ENCODE measurements at regions of chr1 and their contacts with region 1.

Region 1: DNA sequence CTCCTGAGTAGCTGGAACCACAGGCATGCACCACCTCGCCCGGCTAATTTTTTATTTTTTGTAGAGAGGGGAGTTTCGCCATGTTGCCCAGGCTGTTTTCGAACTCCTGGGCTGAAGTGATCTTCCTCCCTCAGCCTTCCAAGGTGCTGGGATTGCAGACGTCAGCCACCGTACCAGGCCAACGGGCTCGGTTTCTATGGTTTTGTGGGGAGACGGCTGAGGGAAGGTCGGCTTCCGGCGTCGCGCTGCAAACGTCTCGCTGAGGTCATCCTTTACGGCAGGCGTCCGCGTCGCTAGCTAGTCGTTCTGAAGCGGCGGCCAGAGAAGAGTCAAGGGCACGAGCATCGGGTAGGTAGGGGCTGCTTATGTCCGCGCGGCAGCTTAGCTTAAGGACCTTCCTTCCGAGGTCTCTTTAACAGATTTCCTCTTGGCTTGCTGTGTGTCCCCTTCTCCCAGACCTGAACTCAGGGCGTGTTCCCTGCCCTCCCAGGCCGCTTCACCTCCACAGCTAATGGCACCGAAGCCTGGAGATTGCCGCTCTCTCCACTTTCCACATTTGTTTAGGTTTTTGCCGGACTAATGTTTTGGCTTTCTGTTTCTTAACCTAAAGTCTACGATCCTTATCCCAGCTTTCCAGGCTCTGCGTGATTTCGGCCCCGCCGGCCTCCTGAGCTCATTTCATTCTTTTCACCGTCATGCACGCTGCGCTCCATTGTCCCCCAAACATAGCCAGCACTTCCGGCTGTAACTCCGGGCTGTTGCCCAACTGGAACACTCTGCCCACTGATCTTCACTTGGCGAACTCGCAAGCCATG is at the start of gene NDUFS5:
- DNase-seq: peak; percentile 80 to 87 (median 83)
- H3K4me3 ChIP-seq: peak within 1 kb of the TSS; percentile 88 to 93
- H3K4me3 Mint-ChIP-seq: peak within 1 kb of the TSS; percentile 94 to 100 (median 97)
- H3K27ac ChIP-seq: peak within 1 kb of the TSS; percentile 86
- H3K27ac Mint-ChIP-seq: peak within 1 kb of the TSS; percentile 95 to 99 (median 97)
- H3K4me1 ChIP-seq: peaks cover 23% of the 10 kb centered on the region
- H3K4me1 Mint-ChIP-seq: peaks cover 18 to 43% (median 31%) of the 10 kb centered on the region in 4 donors
- H3K27me3 ChIP-seq: no peaks in the 10 kb centered on the region
- H3K27me3 Mint-ChIP-seq: no peaks in the 10 kb centered on the region
- total RNA-seq, gene NDUFS5: 122 to 125 TPM

Region 2: GRCh38 chr1:38859561-38860453 is 166.5 kb before region 1 on chr1 and contains the start of gene RRAGC:
- CTCF ChIA-PET with region 1: interaction called, 4 read pairs
- POLR2A ChIA-PET with region 1: interaction called, 9 read pairs
- intact Hi-C with region 1: loop called (anchors 1 kb)
- DNase-seq: peak; percentile 97 to 99 (median 97)
- H3K4me3 ChIP-seq: peak within 1 kb of the TSS; percentile 70 to 92
- H3K4me3 Mint-ChIP-seq: peak within 1 kb of the TSS; percentile 91 to 97 (median 96)
- H3K27ac ChIP-seq: peak within 1 kb of the TSS; percentile 65
- H3K27ac Mint-ChIP-seq: peak within 1 kb of the TSS; percentile 88 to 98 (median 94)
- H3K4me1 ChIP-seq: peaks cover 35% of the 10 kb centered on the region
- H3K4me1 Mint-ChIP-seq: peaks cover 37 to 77% (median 57%) of the 10 kb centered on the region in 4 donors
- H3K27me3 ChIP-seq: no peaks in the 10 kb centered on the region
- H3K27me3 Mint-ChIP-seq: no peaks in the 10 kb centered on the region
- total RNA-seq, gene RRAGC: 24.5 to 25.2 TPM

Region 3: GRCh38 chr1:38873027-38873969 is 153.0 kb before region 1 on chr1 and contains the start of gene MYCBP:
- CTCF ChIA-PET with region 1: interaction called, 3 read pairs
- POLR2A ChIA-PET with region 1: interaction called, 12 read pairs
- intact Hi-C with region 1: loop called (anchors 1 kb)
- DNase-seq: peak; percentile 96 to 99 (median 98)
- H3K4me3 ChIP-seq: peak within 1 kb of the TSS; percentile 77 to 81
- H3K4me3 Mint-ChIP-seq: peak within 1 kb of the TSS; percentile 88 to 95 (median 92)
- H3K27ac ChIP-seq: peak within 1 kb of the TSS; percentile 79
- H3K27ac Mint-ChIP-seq: peak within 1 kb of the TSS; percentile 88 to 94 (median 93)
- H3K4me1 ChIP-seq: peaks cover 35% of the 10 kb centered on the region
- H3K4me1 Mint-ChIP-seq: peaks cover 16 to 34% (median 25%) of the 10 kb centered on the region in 4 donors
- H3K27me3 ChIP-seq: no peaks in the 10 kb centered on the region
- H3K27me3 Mint-ChIP-seq: no peaks in the 10 kb centered on the region
- total RNA-seq, gene MYCBP: 13.4 to 15.4 TPM

Region 4: DNA sequence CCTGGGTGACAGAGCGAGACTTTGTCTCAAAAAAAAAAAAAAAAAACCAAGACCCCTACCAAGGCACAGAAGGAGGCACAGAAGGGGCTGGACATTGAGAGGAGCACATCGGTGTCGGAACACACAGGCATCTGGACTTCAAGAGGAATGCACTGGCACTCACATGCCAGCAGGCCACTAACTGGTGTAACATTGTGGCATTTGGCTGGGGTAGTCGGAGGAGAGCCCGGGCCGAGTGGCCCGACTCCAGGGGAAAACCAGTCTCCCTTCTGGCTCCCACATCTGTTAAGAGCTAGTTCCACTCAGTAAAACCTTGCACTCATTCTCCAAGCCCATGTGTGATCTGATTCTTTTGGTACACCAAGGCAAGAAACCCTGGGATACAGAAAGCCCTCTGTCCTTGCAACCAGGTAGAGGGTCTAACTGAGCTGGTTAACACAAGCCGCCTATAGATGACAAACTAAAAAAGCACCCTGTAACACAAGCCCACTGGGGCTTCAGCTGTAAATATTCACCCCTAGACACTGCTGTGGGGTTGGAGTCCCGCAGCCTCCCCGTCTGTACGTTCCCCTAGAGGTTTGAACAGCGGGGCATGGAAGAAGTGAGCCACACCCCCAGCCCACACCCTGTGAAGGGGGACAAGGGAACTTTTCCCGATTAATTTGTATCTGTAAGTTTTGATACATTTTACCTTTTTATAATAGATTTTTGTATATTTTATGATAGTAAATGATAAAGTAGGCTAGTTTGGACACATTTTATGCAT is 52.4 kb before region 1 on chr1:
- CTCF ChIA-PET with region 1: interaction called, 4 read pairs
- POLR2A ChIA-PET with region 1: interaction called, 26 read pairs
- intact Hi-C with region 1: loop called (anchors 5 kb)
- DNase-seq: no peak
- H3K4me3 ChIP-seq: no peak overlapping the region
- H3K4me3 Mint-ChIP-seq: no peak overlapping the region
- H3K27ac ChIP-seq: no peak overlapping the region
- H3K27ac Mint-ChIP-seq: peak overlapping the region in 1 of 7 donors; percentile 6
- H3K4me1 ChIP-seq: peaks cover 10% of the 10 kb centered on the region
- H3K4me1 Mint-ChIP-seq: peaks cover 12 to 24% (median 17%) of the 10 kb centered on the region in 4 donors
- H3K27me3 ChIP-seq: no peaks in the 10 kb centered on the region
- H3K27me3 Mint-ChIP-seq: peaks cover 0 to 2% of the 10 kb centered on the region in 2 donors

Region 5: DNA sequence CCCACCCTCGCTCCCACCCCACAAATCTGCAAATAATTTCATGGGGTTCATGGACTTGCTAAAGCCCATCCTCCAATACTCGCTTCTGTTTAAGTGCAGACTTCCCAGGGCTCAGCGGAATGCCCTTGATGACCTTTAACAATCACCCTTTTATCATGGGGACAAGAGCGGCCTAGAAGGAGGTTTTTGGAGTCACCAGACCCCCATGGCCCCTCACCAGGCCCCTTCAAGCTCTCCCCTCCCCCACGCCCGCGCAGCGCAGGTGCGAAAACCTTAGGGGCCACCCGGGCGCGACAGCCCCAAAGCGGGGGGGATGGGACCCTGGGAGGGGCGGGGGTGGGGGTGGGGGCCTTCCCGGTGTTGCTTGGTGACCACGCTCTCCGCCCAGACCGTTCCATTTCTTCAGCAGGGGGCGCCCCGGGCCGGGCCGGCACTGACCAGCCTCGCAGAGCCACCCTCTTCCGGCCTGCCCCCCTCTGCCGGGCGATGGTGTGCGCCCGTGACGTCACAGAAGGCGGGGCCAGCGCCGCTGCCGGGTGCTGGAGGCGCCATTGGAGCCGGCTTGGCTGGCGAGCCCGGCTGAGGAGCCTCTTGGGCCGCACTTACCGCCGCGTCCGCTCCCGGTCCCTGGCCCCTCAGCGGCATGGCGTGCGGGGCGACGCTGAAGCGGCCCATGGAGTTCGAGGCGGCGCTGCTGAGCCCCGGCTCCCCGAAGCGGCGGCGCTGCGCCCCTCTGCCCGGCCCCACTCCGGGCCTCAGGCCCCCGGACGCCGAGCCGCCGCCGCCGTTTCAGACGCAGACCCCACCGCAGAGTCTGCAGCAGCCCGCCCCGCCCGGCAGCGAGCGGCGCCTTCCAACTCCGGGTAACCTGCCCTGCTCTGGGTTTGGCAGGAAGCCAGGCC is 35.3 kb before region 1 on chr1 and contains the start of gene AKIRIN1:
- CTCF ChIA-PET with region 1: interaction called, 6 read pairs
- POLR2A ChIA-PET with region 1: interaction called, 23 read pairs
- intact Hi-C with region 1: loop called (anchors 1 kb)
- DNase-seq: peak; percentile 87 to 95 (median 89)
- H3K4me3 ChIP-seq: peak within 1 kb of the TSS; percentile 52 to 67
- H3K4me3 Mint-ChIP-seq: peak within 1 kb of the TSS; percentile 88 to 94 (median 92)
- H3K27ac ChIP-seq: peak within 1 kb of the TSS; percentile 93
- H3K27ac Mint-ChIP-seq: peak within 1 kb of the TSS; percentile 87 to 93 (median 91)
- H3K4me1 ChIP-seq: peaks cover 47% of the 10 kb centered on the region
- H3K4me1 Mint-ChIP-seq: peaks cover 21 to 52% (median 37%) of the 10 kb centered on the region in 4 donors
- H3K27me3 ChIP-seq: no peaks in the 10 kb centered on the region
- H3K27me3 Mint-ChIP-seq: no peaks in the 10 kb centered on the region
- total RNA-seq, gene AKIRIN1: 79.6 to 84.9 TPM

Region 6: DNA sequence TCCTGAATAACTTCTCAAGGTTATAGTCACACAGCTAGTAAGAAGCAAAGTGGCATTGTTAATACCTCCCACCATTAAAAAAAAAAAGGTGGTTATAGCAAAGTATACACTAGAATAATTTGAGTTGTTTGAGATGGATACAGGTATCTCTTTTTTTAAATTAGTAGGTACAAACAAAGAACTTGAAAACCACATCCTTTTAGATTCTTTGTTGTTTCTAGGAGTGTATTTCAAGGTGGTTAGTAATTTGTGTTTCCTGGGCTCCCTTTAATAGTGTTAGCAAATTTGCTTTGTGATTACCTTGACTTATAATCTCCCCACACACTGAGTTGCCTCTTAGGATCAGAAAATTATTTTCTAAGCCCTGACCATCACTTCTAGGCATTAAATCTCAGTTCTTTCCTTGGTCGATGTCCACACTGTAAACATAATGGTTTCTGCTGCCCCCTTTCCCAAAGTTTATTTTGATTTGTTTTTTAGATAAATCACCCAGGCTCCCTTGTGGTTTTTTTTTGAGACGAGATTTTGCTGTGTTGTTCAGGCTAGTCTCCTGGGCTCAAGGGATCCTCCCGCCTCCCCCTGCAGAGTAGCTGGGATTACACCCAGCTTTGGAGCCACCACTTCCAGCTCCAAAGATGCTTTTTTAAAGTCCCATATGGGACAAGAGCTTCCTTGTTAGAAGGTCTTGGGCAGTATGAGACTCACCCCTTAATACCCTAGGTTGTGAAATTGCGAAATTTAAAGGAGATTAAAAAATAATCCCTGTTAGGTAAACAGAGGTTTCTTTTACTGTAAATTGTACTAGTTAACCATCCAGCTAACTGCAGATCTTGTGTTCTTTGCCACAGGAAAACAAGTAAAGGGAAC is 29.0 kb before region 1 on chr1:
- CTCF ChIA-PET with region 1: interaction called, 6 read pairs
- POLR2A ChIA-PET with region 1: interaction called, 23 read pairs
- intact Hi-C with region 1: loop called (anchors 1 kb)
- DNase-seq: peak in 4 of 5 donors; percentile 55 to 63 (median 60)
- H3K4me3 ChIP-seq: peak overlapping the region; percentile 3 to 11
- H3K4me3 Mint-ChIP-seq: peak overlapping the region; percentile 69 to 92 (median 86)
- H3K27ac ChIP-seq: peak overlapping the region; percentile 22
- H3K27ac Mint-ChIP-seq: peak overlapping the region; percentile 82 to 94 (median 91)
- H3K4me1 ChIP-seq: peaks cover 74% of the 10 kb centered on the region
- H3K4me1 Mint-ChIP-seq: peaks cover 40 to 82% (median 59%) of the 10 kb centered on the region in 4 donors
- H3K27me3 ChIP-seq: no peaks in the 10 kb centered on the region
- H3K27me3 Mint-ChIP-seq: no peaks in the 10 kb centered on the region

Region 7: GRCh38 chr1:39003794-39004193 is 22.5 kb before region 1 on chr1:
- CTCF ChIA-PET with region 1: interaction called, 4 read pairs
- POLR2A ChIA-PET with region 1: interaction called, 14 read pairs
- intact Hi-C with region 1: no loop called
- DNase-seq: no peak
- H3K4me3 ChIP-seq: no peak overlapping the region
- H3K4me3 Mint-ChIP-seq: no peak overlapping the region
- H3K27ac ChIP-seq: no peak overlapping the region
- H3K27ac Mint-ChIP-seq: peak overlapping the region in 3 of 7 donors; percentile 61 to 74 (median 61)
- H3K4me1 ChIP-seq: peaks cover 14% of the 10 kb centered on the region
- H3K4me1 Mint-ChIP-seq: peaks cover 13 to 31% (median 24%) of the 10 kb centered on the region in 4 donors
- H3K27me3 ChIP-seq: no peaks in the 10 kb centered on the region
- H3K27me3 Mint-ChIP-seq: no peaks in the 10 kb centered on the region